BJ (cell line): ENCODE measurements at regions of chr5 and their contacts with region 1.

Region 1: GRCh38 chr5:35252963-35253362 is 22.7 kb upstream of the PRLR start:
- DNase-seq: no peak
- H3K4me3 ChIP-seq: no peak overlapping the region
- H3K27me3 ChIP-seq: no peaks in the 10 kb centered on the region
- CTCF ChIP-seq: no peak

Region 2: DNA sequence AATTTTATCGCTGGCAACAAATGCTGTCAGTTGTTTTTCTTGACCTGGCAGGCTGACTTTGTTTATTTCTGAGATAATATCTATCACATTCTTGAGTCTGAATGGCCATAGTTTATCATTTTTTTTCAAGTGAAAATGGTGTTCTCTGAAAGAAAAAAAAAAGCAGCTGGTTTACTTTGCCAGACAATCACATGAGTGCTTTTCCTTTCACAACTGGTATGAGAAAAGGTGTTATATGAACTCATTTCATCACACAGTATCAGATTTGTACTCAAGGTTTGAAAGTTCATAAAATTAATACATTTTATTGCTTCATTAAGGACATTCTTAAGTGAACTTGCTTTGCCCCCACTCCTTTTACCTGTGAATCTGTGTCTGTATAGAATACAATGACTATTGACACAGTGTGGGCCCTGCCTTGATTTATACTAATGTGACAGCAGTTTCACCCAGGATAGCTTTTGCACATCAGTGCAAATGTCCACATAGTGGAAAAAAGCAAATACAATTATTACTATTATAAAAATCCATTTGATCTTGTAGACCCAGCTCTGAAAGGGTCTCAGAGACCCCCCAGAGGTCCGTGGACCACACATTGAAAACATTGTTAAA is 10.4 kb after region 1 on chr5:
- CTCF ChIA-PET with region 1: no interaction called
- POLR2A ChIA-PET with region 1: interaction called, 26 read pairs
- DNase-seq: no peak
- H3K4me3 ChIP-seq: no peak overlapping the region
- H3K27me3 ChIP-seq: no peaks in the 10 kb centered on the region
- CTCF ChIP-seq: no peak